ENCODE measurements at regions of chr17 and their contacts with region 1.

Region 1: GRCh38 chr17:3903881-3904290 is 11.0 kb upstream of the CAMKK1 start:
- DNase-seq: no peak
- ATAC-seq: no peak
- H3K4me3 ChIP-seq: no peak overlapping the region
- H3K27ac ChIP-seq: no peak overlapping the region
- H3K4me1 ChIP-seq: no peaks in the 10 kb centered on the region
- H3K27me3 ChIP-seq: no peaks in the 10 kb centered on the region
- CTCF ChIP-seq: no peak

Region 2: GRCh38 chr17:3796110-3796821 is 107.6 kb before region 1 on chr17:
- CTCF ChIA-PET with region 1: no interaction called
- POLR2A ChIA-PET with region 1: interaction called, 10 read pairs
- in situ Hi-C with region 1: no loop called
- intact Hi-C with region 1: no loop called
- DNase-seq: no peak
- ATAC-seq: no peak
- H3K4me3 ChIP-seq: no peak overlapping the region
- H3K27ac ChIP-seq: no peak overlapping the region
- H3K4me1 ChIP-seq: peaks cover 5% of the 10 kb centered on the region
- H3K27me3 ChIP-seq: no peaks in the 10 kb centered on the region
- CTCF ChIP-seq: no peak

Measured in Panc1 (cell line).